ENCODE measurements at regions of chr3 and their contacts with region 1.

Region 1: GRCh38 chr3:49723628-49724551 is at the start of gene GMPPB:
- DNase-seq: peak; percentile 96 to 98 (median 97)
- H3K4me3 ChIP-seq: peak within 1 kb of the TSS; percentile 96
- H3K27ac ChIP-seq: peak within 1 kb of the TSS; percentile 68 to 87
- H3K4me1 ChIP-seq: peaks cover 7% of the 10 kb centered on the region
- H3K27me3 ChIP-seq: no peaks in the 10 kb centered on the region
- CTCF ChIP-seq: no peak
- EP300 ChIP-seq: peak; percentile 28
- POLR2A ChIP-seq: peak; percentile 73
- total RNA-seq, gene GMPPB: 14.5 to 38.5 (median 29.2) TPM

Region 2: DNA sequence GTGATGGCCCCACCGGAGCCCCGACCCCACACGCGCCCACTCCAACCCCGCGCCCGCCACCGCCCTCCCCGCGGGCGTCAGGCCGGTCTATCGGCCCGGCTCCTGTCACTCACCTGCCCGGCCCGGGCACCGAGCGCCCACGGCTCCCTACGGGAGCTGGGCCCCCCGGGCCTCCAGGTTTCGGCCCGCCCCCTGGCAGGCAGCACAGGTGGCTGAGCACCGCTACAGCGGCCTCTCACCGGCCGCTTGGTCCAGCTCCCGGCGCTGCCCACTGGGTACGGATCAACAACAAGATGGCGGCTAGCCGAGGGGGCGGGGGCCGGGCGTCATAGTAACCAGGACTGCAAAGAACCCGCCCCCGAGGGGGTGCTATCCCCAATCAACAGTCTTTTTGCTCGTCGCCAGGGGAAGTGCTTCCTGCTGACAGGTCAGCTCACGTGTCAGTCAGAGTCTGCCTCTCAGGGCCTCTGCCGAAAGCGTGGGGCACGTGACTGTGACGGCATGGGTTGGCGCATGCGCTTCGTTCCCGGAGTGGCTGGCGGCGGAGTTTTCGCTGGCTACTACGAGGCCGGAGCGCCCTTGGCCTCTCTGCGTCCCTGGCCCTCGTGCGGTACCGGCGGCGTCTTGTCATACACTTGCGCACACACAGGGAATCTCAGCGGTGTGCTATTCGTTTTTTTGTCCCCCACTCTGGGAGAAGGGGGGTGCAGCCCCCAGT is 62.5 kb after region 1 on chr3 and contains the start of gene IP6K1:
- intact Hi-C with region 1: loop called in 2 of 4 experiments (anchors 2 to 5 kb)
- DNase-seq: peak; percentile 100
- H3K4me3 ChIP-seq: peak within 1 kb of the TSS; percentile 100
- H3K27ac ChIP-seq: peak within 1 kb of the TSS; percentile 87 to 94
- H3K4me1 ChIP-seq: peaks cover 14% of the 10 kb centered on the region
- H3K27me3 ChIP-seq: no peaks in the 10 kb centered on the region
- CTCF ChIP-seq: peak in 2 of 3 donors; percentile 13 to 19
- EP300 ChIP-seq: no peak
- POLR2A ChIP-seq: peak; percentile 72
- total RNA-seq, gene IP6K1: 27.9 to 52.4 (median 47.0) TPM

Region 3: DNA sequence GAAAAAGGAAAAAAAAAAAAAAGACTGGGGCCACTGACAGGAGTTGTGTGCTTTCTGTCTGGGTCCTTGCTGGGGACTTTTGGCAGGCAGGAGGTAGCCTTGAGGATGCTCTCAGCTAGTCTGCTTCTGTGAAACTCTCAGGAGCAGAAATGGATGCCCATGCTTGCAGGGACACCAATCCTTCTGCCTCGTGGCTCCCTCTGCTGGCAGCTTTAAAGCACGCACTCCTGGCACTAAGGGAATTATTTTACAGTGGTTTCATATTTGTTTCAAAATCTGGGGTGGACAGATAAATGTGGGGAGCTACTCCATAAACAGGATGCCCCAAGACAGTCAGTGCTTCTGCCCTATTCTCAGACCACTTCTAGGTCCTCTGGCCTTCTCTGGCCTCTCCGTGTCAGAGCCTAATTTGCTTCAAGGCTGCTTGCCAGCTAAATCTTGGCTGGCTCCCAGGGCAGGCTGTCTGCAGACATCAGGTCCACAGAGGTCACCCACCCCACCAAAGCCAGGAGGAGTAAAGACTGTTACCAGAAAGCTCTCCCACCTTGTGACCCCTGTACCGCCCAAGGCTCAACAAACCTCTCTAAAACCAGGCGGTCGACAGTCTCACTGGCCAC is 115.4 kb after region 1 on chr3:
- intact Hi-C with region 1: loop called in 1 of 4 experiments (anchors 10 kb)
- DNase-seq: peak; percentile 80 to 88 (median 85)
- H3K4me3 ChIP-seq: no peak overlapping the region
- H3K27ac ChIP-seq: no peak overlapping the region
- H3K4me1 ChIP-seq: peaks cover 4% of the 10 kb centered on the region
- H3K27me3 ChIP-seq: no peaks in the 10 kb centered on the region
- CTCF ChIP-seq: peak; percentile 85 to 92 (median 91)
- EP300 ChIP-seq: no peak
- POLR2A ChIP-seq: no peak

Measured in ovary (tissue), 10 donors.